ENCODE measurements at regions of chr1 and their contacts with region 1.

Region 1: GRCh38 chr1:62593825-62594394 is 3.4 kb upstream of the ANGPTL3 start:
- DNase-seq: no peak
- ATAC-seq: no peak

Region 2: DNA sequence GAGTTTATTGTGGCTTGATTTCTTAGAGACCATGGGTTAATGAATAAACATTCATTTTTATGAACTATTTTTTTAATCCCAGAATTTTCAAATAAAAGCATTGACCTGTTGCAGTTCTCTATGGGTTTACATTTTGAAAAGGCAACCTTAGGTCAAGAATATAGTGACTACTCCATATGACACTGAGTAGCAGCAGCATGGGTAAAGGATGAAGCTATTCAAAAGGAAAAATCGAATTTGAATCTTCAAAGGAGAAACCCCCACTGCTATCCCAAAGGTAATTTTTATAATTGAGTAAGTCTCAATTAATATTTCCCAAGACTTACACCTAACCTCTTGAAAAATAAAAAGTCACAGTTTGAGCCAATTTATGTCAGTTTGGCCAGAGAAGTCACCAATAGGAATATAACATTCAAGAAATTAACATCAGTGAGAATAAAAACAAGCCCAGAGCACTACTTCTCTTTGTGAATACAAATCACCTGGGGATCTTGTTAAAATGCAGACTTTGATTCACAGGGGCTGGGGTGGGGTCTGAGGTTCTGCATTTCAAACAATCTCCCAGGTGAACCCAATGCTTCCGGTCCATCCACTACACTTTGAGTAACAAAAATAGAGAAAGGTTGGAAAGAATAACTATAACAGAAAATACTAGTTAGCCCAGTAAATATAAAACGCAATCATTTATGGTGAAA is 117.2 kb before region 1 on chr1:
- intact Hi-C with region 1: no loop called
- DNase-seq: no peak
- ATAC-seq: no peak

Region 3: DNA sequence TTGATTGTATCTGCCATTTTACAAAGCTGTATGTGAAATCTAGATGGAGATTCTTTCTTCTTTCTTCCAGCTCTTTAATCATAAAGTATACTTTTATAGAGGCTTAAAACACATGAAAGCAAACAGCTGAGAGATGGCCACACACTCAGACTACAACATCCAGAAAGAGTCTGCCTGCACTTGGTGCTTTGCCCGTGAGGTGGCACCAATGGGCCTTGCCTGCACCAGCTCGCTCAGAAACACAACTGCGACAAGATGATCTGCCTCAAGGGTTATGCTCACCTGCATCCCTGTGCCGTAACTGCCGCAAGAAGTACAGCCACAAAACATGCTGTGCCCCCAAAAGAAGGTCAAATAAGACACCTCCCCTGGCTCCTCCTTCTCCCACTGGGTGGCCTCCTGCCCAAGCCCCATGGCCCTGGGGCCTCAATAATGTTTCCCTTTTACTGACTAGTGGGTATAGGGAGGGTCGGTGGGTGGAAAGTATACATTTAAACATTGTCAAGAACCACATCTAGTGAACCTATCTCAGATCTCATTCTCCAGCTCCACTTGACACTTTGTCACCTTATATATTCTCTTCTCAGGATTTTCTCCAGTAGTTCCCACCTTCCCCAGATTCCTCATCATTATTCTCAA is 63.3 kb before region 1 on chr1:
- intact Hi-C with region 1: loop called (anchors 2 kb)
- DNase-seq: no peak
- ATAC-seq: peak; percentile 37

Region 4: DNA sequence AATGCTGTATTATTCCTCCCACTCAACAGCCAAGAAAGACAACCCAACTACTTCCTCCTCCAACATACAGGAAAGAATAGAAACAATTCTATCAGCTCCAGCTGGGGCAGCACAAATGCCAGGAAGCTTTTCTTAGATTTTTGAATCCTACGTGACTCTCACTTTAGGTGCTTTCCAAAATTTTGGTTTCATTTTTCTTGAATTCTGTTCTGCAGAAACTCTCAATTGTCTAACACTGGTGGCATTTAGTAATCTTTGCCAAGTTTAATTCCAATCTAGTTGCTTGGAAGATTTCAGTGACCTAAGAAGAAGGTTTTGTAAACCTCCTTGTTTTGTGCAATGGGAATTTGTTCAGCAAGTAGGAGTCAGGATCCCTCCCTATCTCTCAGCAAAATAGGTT is 131.3 kb after region 1 on chr1:
- intact Hi-C with region 1: no loop called
- DNase-seq: no peak
- ATAC-seq: peak; percentile 34

Measured in Right ventricle myocardium inferior (tissue), 1 donor.